ENCODE measurements at regions of chr4 and their contacts with region 1.

Region 1: DNA sequence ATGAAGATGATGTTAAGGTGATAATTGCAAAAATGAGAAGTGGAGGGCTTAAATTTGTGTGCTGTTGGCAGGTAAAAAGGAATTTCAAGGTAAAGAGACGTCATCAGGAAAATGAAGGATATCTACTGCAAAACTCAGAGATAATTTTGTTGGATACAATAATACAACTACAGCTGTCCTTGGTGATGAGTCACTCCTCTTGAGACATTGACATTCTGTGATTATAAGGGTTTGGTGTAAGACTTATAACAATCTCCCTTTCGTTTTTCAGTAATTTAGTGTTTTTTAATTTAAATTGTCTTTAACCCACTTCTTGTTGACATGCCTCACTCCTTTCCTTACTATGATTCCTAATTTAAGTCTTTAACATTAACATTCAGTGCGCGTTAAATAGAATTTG is 1074.1 kb upstream of the SLIT2 start:
- DNase-seq: no peak
- ATAC-seq: no peak
- H3K4me3 ChIP-seq: no peak overlapping the region
- H3K27ac ChIP-seq: no peak overlapping the region
- H3K4me1 ChIP-seq: no peaks in the 10 kb centered on the region
- H3K27me3 ChIP-seq: no peaks in the 10 kb centered on the region
- CTCF ChIP-seq: no peak
- EP300 ChIP-seq: no peak
- POLR2A ChIP-seq: no peak
- RAD21 ChIP-seq: no peak

Region 2: GRCh38 chr4:19119904-19120560 is 57.6 kb before region 1 on chr4:
- CTCF ChIA-PET with region 1: no interaction called
- POLR2A ChIA-PET with region 1: no interaction called
- RAD21 ChIA-PET with region 1: no interaction called
- SMC1A ChIA-PET with region 1: no interaction called
- in situ Hi-C with region 1: no loop called
- intact Hi-C with region 1: loop called (anchors 2 kb)
- DNase-seq: no peak
- ATAC-seq: no peak
- H3K4me3 ChIP-seq: no peak overlapping the region
- H3K27ac ChIP-seq: no peak overlapping the region
- H3K4me1 ChIP-seq: no peaks in the 10 kb centered on the region
- H3K27me3 ChIP-seq: no peaks in the 10 kb centered on the region
- CTCF ChIP-seq: no peak
- EP300 ChIP-seq: no peak
- POLR2A ChIP-seq: no peak
- RAD21 ChIP-seq: no peak